B cell (primary cell): ENCODE measurements at regions of chr17 and their contacts with region 1.

Region 1: GRCh38 chr17:48816774-48817590 is at the start of gene TTLL6:
- DNase-seq: peak; percentile 75
- ATAC-seq: peak; percentile 94
- H3K4me3 ChIP-seq: peak within 1 kb of the TSS; percentile 38 to 67 (median 48)
- H3K4me3 Mint-ChIP-seq: peak within 1 kb of the TSS; percentile 88
- H3K27ac ChIP-seq: no peak within 1 kb of the TSS
- H3K27ac Mint-ChIP-seq: peak within 1 kb of the TSS; percentile 60
- H3K4me1 ChIP-seq: peaks cover 14 to 17% of the 10 kb centered on the region in 2 donors
- H3K4me1 Mint-ChIP-seq: peaks cover 17% of the 10 kb centered on the region
- H3K27me3 ChIP-seq: peaks cover 0 to 51% (median 17%) of the 10 kb centered on the region in 4 experiments
- H3K27me3 Mint-ChIP-seq: peaks cover 39% of the 10 kb centered on the region
- CTCF ChIP-seq: no peak
- total RNA-seq, gene TTLL6: not detected in 2 replicates

Region 2: GRCh38 chr17:48575066-48575582 is 241.9 kb before region 1 on chr17:
- CTCF ChIA-PET with region 1: no interaction called
- POLR2A ChIA-PET with region 1: no interaction called
- intact Hi-C with region 1: no loop called
- DNase-seq: no peak
- ATAC-seq: no peak
- H3K4me3 ChIP-seq: no peak overlapping the region
- H3K4me3 Mint-ChIP-seq: no peak overlapping the region
- H3K27ac ChIP-seq: no peak overlapping the region
- H3K27ac Mint-ChIP-seq: no peak overlapping the region
- H3K4me1 ChIP-seq: peaks cover 27 to 30% of the 10 kb centered on the region in 2 donors
- H3K4me1 Mint-ChIP-seq: peaks cover 31% of the 10 kb centered on the region
- H3K27me3 ChIP-seq: peaks cover 0 to 43% (median 20%) of the 10 kb centered on the region in 4 experiments
- H3K27me3 Mint-ChIP-seq: peaks cover 22% of the 10 kb centered on the region
- CTCF ChIP-seq: no peak

Region 3: GRCh38 chr17:48791128-48792032 is 25.6 kb before region 1 on chr17:
- CTCF ChIA-PET with region 1: no interaction called
- POLR2A ChIA-PET with region 1: no interaction called
- intact Hi-C with region 1: no loop called
- DNase-seq: peak; percentile 32
- ATAC-seq: no peak
- H3K4me3 ChIP-seq: no peak overlapping the region
- H3K4me3 Mint-ChIP-seq: no peak overlapping the region
- H3K27ac ChIP-seq: no peak overlapping the region
- H3K27ac Mint-ChIP-seq: no peak overlapping the region
- H3K4me1 ChIP-seq: peaks cover 0 to 10% of the 10 kb centered on the region in 2 donors
- H3K4me1 Mint-ChIP-seq: peaks cover 3% of the 10 kb centered on the region
- H3K27me3 ChIP-seq: peaks cover 0 to 20% (median 3%) of the 10 kb centered on the region in 4 experiments
- H3K27me3 Mint-ChIP-seq: peaks cover 47% of the 10 kb centered on the region
- CTCF ChIP-seq: peak; percentile 33

Region 4: DNA sequence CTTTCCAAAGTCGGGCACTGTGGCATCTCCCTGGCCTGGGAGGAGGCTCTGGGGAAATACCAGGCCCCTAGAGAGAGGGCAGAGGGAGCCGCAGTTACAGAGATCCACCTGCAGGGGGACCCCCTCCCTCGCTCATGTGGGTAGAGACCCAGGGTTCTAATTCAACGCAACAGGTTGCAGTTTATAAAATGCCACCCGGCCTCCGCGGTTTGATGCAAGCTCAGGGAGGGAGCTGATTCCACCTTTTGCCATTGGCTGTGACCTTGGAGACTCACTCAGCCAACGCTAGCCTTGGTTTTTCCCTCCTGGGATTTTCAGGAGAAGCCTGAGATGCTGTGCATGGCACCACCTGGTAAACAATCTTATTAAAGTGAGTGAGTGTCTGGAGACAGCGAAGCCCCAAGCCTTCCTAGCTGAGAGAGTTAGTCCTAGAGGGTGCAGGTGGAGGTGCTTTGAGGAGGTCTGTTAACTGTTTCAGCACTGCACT is 12.0 kb before region 1 on chr17:
- CTCF ChIA-PET with region 1: interaction called, 44 read pairs
- POLR2A ChIA-PET with region 1: no interaction called
- intact Hi-C with region 1: no loop called
- DNase-seq: peak; percentile 72
- ATAC-seq: peak; percentile 93
- H3K4me3 ChIP-seq: no peak overlapping the region
- H3K4me3 Mint-ChIP-seq: no peak overlapping the region
- H3K27ac ChIP-seq: no peak overlapping the region
- H3K27ac Mint-ChIP-seq: no peak overlapping the region
- H3K4me1 ChIP-seq: peaks cover 2 to 3% of the 10 kb centered on the region in 2 donors
- H3K4me1 Mint-ChIP-seq: no peaks in the 10 kb centered on the region
- H3K27me3 ChIP-seq: peaks cover 0 to 9% (median 4%) of the 10 kb centered on the region in 4 experiments
- H3K27me3 Mint-ChIP-seq: peaks cover 14% of the 10 kb centered on the region
- CTCF ChIP-seq: peak; percentile 95

Region 5: DNA sequence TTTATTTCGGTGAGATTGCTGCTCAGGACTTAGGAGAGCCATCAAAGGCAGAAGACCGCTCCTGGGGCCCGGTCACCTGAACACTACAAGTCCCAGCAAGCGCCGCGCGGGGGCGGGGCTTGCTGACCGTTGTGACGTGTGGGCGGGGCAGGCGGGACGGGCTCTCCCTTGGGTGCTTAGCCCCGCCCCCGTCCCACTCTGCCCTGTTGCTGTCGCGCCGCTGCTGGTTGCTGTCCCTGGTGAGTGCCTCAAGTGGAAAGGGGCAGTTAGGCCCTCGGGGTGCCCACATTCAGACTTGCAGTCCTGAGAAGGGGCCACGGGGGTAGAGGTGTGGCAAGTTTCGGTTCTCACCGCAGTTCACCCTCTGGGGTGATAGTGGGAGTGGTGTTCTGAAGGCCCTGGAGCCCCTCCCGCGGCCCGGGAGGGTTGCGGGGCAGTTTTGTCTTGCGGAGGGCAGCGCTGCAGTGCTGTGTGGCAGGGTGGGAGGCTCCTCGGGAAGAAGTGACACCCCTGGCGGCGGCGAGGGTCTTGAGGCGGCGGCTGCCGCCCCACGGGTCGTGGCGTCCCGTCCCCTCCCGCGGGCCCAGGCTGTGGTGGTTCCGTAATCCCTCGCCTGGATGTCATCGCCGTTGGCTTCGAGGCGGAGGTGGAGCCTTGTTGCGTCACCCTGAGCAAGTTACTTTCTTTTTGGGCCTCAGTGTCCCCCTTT is 14.0 kb after region 1 on chr17 and contains the start of gene CALCOCO2:
- CTCF ChIA-PET with region 1: interaction called, 30 read pairs
- POLR2A ChIA-PET with region 1: no interaction called
- intact Hi-C with region 1: loop called (anchors 1 kb)
- DNase-seq: peak; percentile 95
- ATAC-seq: peak; percentile 94
- H3K4me3 ChIP-seq: peak within 1 kb of the TSS; percentile 85 to 99 (median 90)
- H3K4me3 Mint-ChIP-seq: peak within 1 kb of the TSS; percentile 100
- H3K27ac ChIP-seq: peak within 1 kb of the TSS; percentile 93 to 95
- H3K27ac Mint-ChIP-seq: peak within 1 kb of the TSS; percentile 98
- H3K4me1 ChIP-seq: peaks cover 23 to 33% of the 10 kb centered on the region in 2 donors
- H3K4me1 Mint-ChIP-seq: peaks cover 39% of the 10 kb centered on the region
- H3K27me3 ChIP-seq: no peaks in the 10 kb centered on the region
- H3K27me3 Mint-ChIP-seq: peaks cover 6% of the 10 kb centered on the region
- CTCF ChIP-seq: no peak
- total RNA-seq, gene CALCOCO2: 139 and 148 TPM in 2 replicates

Region 6: GRCh38 chr17:48836004-48836403 is 19.0 kb after region 1 on chr17:
- CTCF ChIA-PET with region 1: interaction called, 37 read pairs
- POLR2A ChIA-PET with region 1: no interaction called
- intact Hi-C with region 1: loop called (anchors 1 kb)
- DNase-seq: no peak
- ATAC-seq: no peak
- H3K4me3 ChIP-seq: no peak overlapping the region
- H3K4me3 Mint-ChIP-seq: no peak overlapping the region
- H3K27ac ChIP-seq: no peak overlapping the region
- H3K27ac Mint-ChIP-seq: no peak overlapping the region
- H3K4me1 ChIP-seq: peaks cover 64 to 66% of the 10 kb centered on the region in 2 donors
- H3K4me1 Mint-ChIP-seq: peaks cover 71% of the 10 kb centered on the region
- H3K27me3 ChIP-seq: no peaks in the 10 kb centered on the region
- H3K27me3 Mint-ChIP-seq: no peaks in the 10 kb centered on the region
- CTCF ChIP-seq: no peak

Region 7: GRCh38 chr17:48841395-48841831 is 24.4 kb after region 1 on chr17:
- CTCF ChIA-PET with region 1: interaction called, 37 read pairs
- POLR2A ChIA-PET with region 1: interaction called, 4 read pairs
- intact Hi-C with region 1: loop called (anchors 1 kb)
- DNase-seq: peak; percentile 83
- ATAC-seq: peak; percentile 91
- H3K4me3 ChIP-seq: peak overlapping the region; percentile 23 to 56 (median 46)
- H3K4me3 Mint-ChIP-seq: peak overlapping the region; percentile 90
- H3K27ac ChIP-seq: peak overlapping the region; percentile 76 to 91
- H3K27ac Mint-ChIP-seq: peak overlapping the region; percentile 96
- H3K4me1 ChIP-seq: peaks cover 47 to 48% of the 10 kb centered on the region in 2 donors
- H3K4me1 Mint-ChIP-seq: peaks cover 42% of the 10 kb centered on the region
- H3K27me3 ChIP-seq: no peaks in the 10 kb centered on the region
- H3K27me3 Mint-ChIP-seq: no peaks in the 10 kb centered on the region
- CTCF ChIP-seq: no peak

Region 8: DNA sequence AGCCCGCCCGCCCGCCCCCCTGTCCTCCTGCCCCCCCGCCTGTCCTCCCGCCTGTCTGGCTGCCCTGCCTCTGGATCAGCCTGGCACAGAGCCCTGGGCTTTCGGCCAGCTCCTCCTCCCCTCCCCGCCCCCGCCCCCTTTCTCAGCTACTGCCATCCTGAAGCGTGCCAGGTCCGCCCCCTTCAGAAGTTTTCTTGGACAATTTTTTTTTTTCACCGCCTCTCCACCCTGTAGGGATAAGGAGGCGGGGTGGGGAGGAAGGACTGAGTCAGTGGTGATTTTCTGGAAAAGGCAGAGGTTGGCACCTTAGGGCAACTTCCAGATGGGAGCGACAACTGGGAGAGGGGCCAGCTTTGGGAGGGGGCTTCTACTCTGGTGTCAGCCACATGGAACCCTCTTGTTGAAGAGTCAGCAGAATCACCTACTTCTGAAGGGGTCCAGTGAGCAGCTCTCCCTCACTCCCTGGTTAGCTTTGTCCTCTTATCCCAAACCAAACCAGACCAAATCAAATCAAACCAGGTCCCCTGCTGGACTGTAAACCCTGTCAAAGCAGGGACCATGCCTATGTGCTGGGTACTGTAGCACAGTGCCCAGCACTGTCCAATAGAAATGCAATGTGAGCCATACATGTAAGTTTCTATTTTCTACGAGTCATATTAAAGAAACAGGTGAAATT is 199.9 kb after region 1 on chr17:
- CTCF ChIA-PET with region 1: no interaction called
- POLR2A ChIA-PET with region 1: no interaction called
- intact Hi-C with region 1: no loop called
- DNase-seq: no peak
- ATAC-seq: no peak
- H3K4me3 ChIP-seq: no peak overlapping the region
- H3K4me3 Mint-ChIP-seq: no peak overlapping the region
- H3K27ac ChIP-seq: no peak overlapping the region
- H3K27ac Mint-ChIP-seq: no peak overlapping the region
- H3K4me1 ChIP-seq: peaks cover 0 to 5% of the 10 kb centered on the region in 2 donors
- H3K4me1 Mint-ChIP-seq: peaks cover 3% of the 10 kb centered on the region
- H3K27me3 ChIP-seq: peaks cover 0 to 41% (median 10%) of the 10 kb centered on the region in 4 experiments
- H3K27me3 Mint-ChIP-seq: peaks cover 40% of the 10 kb centered on the region
- CTCF ChIP-seq: no peak